Posterior vena cava (tissue), 2 donors: ENCODE measurements at regions of chr1 and their contacts with region 1.

Region 1: DNA sequence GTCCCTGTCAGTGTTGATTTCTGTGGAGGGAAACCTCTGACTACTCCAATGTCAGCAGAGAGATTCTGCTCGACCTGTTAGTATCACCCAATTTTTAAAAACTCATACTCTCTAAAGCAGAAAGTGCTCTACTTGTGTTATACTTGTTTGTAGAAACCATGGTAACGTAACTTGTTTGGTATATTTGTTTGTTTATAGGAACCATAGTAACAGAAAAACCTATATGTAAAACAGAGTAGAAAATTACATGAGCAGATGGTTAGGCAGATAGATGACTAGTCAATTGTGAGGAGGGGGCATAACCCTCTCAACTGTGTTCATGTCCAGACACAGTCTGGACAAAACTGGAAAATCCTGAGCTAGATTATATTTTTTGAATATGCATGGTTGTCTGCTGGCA is 6.7 kb downstream of the TRIM45 start:
- DNase-seq: no peak

Region 2: GRCh38 chr1:116628448-116628847 is 486.4 kb before region 1 on chr1:
- intact Hi-C with region 1: loop called in 1 of 2 experiments (anchors 5 kb)
- DNase-seq: peak; percentile 25